PC-3 (cell line): ENCODE measurements at regions of chr10 and their contacts with region 1.

Region 1: DNA sequence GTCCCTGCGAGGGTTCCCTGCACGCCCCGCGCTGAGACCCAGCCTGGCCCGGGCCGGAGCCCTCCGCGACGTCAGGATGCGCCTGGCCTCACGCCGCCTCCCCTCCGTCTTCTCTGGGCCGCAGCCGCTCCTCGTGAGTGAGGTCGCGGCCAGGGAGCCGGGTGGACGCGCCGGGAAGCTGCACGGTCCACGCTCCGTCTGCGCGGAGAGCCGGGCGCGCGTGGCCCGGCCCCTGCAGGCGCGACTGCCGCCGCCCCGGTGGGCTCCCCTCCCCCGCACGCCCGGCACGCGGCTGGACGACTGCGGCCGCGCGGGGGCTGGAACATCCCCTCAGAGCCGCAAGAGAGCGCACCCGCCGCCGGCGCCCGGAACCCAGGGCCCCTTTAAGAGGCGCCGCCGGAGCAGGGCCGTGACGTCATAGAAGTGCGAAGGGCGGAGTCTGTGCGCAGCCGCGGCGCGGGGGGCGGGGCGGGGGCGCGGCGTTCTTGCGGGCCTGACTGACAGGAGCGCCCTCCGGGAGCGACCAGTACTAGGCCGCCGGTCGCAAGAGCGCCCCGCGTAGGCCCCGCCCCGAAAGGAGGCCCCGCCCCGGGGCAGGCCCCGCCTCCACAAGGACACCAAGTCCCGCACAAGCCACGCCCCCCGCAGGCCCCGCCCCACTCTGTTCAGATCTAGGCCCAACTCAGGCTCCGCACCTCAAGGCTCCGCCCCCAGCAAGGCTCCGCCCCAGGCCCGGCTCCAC is 445 bp upstream of the INPP5A start:
- DNase-seq: peak; percentile 97
- ATAC-seq: peak; percentile 66
- H3K4me3 ChIP-seq: peak overlapping the region; percentile 69
- H3K27ac ChIP-seq: peak overlapping the region; percentile 24; the same call in 1 of the 2 replicates
- H3K4me1 ChIP-seq: peaks cover 70% of the 10 kb centered on the region
- H3K27me3 ChIP-seq: no peaks in the 10 kb centered on the region
- CTCF ChIP-seq: no peak

Region 2: DNA sequence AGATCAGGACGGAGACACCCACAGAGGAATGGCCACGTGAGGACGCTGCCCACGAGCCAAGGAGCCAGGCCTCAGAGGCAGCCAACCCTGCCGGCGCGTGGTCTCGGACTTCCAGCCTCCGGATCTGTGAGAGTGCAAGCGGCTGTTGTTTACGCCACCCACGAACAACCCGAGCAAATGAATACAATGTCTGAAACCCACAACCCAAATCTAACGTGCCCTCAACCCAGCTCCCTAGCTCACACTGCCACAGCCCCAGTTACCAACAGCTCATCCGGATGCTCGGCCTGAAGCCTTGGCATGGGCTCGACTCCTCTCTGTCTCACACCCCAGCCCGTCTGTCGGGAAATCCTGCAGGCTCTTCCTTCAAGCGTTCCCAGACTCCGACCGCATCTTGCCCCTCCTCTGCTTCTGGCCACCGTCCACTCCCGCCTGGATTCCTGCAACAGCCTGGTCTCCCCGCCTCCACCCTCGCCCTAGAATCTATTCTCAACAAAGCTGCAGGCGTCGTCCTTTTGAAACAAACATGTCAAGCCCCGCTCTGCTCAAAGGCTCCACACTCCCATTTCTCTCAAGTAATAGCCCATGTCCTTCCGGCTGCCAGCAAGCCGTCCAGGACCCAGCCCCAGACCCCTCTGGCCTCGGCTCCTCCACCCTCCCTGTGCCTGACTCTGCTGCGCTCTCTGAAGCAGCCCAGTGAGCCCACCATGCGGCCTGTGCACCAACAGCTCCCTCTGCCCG is 264.7 kb before region 1 on chr10:
- CTCF ChIA-PET with region 1: no interaction called
- POLR2A ChIA-PET with region 1: no interaction called
- intact Hi-C with region 1: no loop called
- DNase-seq: no peak
- ATAC-seq: no peak
- H3K4me3 ChIP-seq: no peak overlapping the region
- H3K27ac ChIP-seq: no peak overlapping the region
- H3K4me1 ChIP-seq: no peaks in the 10 kb centered on the region
- H3K27me3 ChIP-seq: no peaks in the 10 kb centered on the region
- CTCF ChIP-seq: no peak

Region 3: DNA sequence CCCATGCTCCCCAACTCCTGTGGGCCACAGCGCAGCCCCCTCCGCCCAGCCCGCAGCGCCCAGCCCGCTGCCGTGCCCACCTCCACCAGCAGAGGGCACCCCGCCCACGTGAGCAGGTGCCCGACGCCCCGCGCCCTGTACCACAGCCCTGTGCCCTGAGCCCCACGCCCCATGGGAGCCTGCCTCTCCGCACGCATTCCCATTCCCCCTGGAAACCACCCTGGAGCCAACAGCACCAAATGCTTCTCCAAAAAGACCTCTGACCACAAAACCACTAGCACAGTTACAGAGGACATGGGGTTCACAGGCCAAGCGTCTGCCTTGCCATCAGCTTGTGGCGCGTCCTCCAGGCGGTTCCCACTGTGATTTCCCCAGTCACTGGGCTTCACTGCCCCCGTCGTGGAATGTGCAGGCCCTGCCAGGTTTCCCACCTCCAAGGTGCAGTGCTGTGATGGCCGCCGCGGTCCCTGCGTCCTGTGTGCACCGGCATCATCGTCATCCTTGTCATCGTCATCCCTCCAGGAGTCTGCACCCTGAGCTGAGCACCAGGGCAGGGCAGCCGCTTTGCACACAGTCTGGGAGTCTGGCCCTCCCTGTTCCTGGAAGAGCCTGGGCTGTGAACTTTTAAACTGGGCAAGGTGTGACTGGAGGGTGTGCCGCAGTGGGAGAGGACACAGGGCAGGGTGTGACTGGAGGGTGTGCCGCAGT is 78.4 kb before region 1 on chr10:
- CTCF ChIA-PET with region 1: no interaction called
- POLR2A ChIA-PET with region 1: no interaction called
- intact Hi-C with region 1: loop called (anchors 5 kb)
- DNase-seq: peak; percentile 36
- ATAC-seq: peak; percentile 68
- H3K4me3 ChIP-seq: no peak overlapping the region
- H3K27ac ChIP-seq: no peak overlapping the region
- H3K4me1 ChIP-seq: 0 out of 2 replicates have a peak, but pooled peaks cover 5% of the 10 kb centered on the region
- H3K27me3 ChIP-seq: no peaks in the 10 kb centered on the region
- CTCF ChIP-seq: peak; percentile 88

Region 4: GRCh38 chr10:133159950-133160819 is 623.0 kb after region 1 on chr10 and contains the start of gene KNDC1:
- CTCF ChIA-PET with region 1: no interaction called
- POLR2A ChIA-PET with region 1: no interaction called
- intact Hi-C with region 1: no loop called
- DNase-seq: no peak
- ATAC-seq: peak; percentile 53
- H3K4me3 ChIP-seq: peak within 1 kb of the TSS; percentile 38; the same call in 1 of the 2 replicates
- H3K27ac ChIP-seq: no peak within 1 kb of the TSS
- H3K4me1 ChIP-seq: no peaks in the 10 kb centered on the region; the same call in 1 of the 2 replicates
- H3K27me3 ChIP-seq: peaks cover 14% of the 10 kb centered on the region
- CTCF ChIP-seq: no peak
- total RNA-seq, gene KNDC1: not detected in 2 replicates